ENCODE measurements at regions of chr15 and their contacts with region 1.

Region 1: DNA sequence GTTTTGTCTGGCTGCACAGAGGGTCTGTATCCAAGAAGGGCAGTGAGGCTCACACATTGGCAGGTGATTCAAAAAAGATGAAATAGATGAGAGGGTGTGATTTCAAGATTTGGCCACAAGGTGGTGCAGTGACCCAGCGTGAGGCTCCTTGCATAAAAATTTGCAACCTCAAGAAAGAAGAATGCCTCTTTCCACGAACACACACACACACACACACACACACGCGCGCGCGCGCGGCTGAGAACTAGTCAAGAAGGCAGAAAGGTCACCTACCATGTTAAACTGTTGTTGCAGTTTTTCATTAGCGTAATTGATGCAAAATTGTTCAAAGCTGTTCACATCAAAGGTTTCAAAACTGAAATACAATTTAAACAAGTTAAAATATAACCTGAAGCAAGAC is 39.2 kb downstream of the MYO5C start:
- DNase-seq: peak; percentile 61 to 70
- H3K4me3 ChIP-seq: no peak overlapping the region
- H3K4me3 Mint-ChIP-seq: no peak overlapping the region
- H3K27ac Mint-ChIP-seq: peak overlapping the region; percentile 33
- H3K4me1 ChIP-seq: no peaks in the 10 kb centered on the region
- H3K4me1 Mint-ChIP-seq: no peaks in the 10 kb centered on the region
- H3K27me3 ChIP-seq: no peaks in the 10 kb centered on the region
- H3K27me3 Mint-ChIP-seq: no peaks in the 10 kb centered on the region
- CTCF ChIP-seq: peak; percentile 66 to 69

Region 2: GRCh38 chr15:52337198-52337853 is 81.0 kb after region 1 on chr15:
- CTCF ChIA-PET with region 1: interaction called, 3 read pairs
- POLR2A ChIA-PET with region 1: no interaction called
- intact Hi-C with region 1: loop called (anchors 2 kb)
- DNase-seq: no peak
- H3K4me3 ChIP-seq: no peak overlapping the region
- H3K4me3 Mint-ChIP-seq: no peak overlapping the region
- H3K27ac Mint-ChIP-seq: no peak overlapping the region
- H3K4me1 ChIP-seq: peaks cover 5% of the 10 kb centered on the region; the same call in 1 of the 2 replicates
- H3K4me1 Mint-ChIP-seq: no peaks in the 10 kb centered on the region
- H3K27me3 ChIP-seq: no peaks in the 10 kb centered on the region
- H3K27me3 Mint-ChIP-seq: no peaks in the 10 kb centered on the region
- CTCF ChIP-seq: no peak

Region 3: GRCh38 chr15:52466134-52466701 is 209.9 kb after region 1 on chr15:
- CTCF ChIA-PET with region 1: interaction called, 3 read pairs
- POLR2A ChIA-PET with region 1: no interaction called
- intact Hi-C with region 1: loop called (anchors 1 kb)
- DNase-seq: no peak
- H3K4me3 ChIP-seq: no peak overlapping the region
- H3K4me3 Mint-ChIP-seq: no peak overlapping the region
- H3K27ac Mint-ChIP-seq: no peak overlapping the region
- H3K4me1 ChIP-seq: no peaks in the 10 kb centered on the region
- H3K4me1 Mint-ChIP-seq: no peaks in the 10 kb centered on the region
- H3K27me3 ChIP-seq: no peaks in the 10 kb centered on the region
- H3K27me3 Mint-ChIP-seq: no peaks in the 10 kb centered on the region
- CTCF ChIP-seq: no peak

Region 4: DNA sequence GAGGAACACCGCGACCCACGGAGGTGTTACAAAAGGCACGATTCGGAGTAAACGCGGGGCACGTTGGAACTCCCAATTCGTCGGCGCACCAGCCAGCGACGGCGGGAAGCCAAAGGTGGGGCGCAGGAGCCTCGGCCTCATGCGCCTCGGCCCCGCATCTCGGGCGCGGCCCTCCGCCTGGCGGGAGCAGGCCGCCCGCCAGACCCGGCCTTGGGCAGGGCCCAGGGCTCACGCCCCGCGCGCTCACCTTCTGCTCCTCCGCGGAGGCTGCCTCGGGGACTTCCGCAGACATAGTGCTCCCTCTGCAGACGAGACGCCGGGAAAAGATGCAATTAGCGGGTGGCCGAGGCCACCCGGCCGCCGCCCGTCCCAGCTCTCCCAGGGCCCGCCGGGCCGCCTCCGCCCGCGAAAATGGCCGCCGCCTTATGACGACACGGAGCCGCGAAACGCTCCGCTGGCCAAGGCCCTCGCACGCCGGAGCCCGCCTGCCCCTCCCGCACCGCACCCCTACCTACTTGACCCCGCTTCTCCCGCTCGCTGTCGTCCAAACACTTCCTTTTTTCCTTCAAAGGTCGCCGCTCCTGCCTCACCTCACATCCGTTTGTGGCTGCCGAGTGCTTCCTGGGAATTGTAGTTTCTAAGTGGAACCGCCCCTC is 312.4 kb after region 1 on chr15 and contains the start of gene ARPP19:
- CTCF ChIA-PET with region 1: no interaction called
- POLR2A ChIA-PET with region 1: no interaction called
- intact Hi-C with region 1: loop called (anchors 2 kb)
- DNase-seq: peak; percentile 95 to 96
- H3K4me3 ChIP-seq: peak within 1 kb of the TSS; percentile 56
- H3K4me3 Mint-ChIP-seq: peak within 1 kb of the TSS; percentile 77
- H3K27ac Mint-ChIP-seq: peak within 1 kb of the TSS; percentile 85
- H3K4me1 ChIP-seq: no peaks in the 10 kb centered on the region; the same call in 1 of the 2 replicates
- H3K4me1 Mint-ChIP-seq: peaks cover 7% of the 10 kb centered on the region
- H3K27me3 ChIP-seq: no peaks in the 10 kb centered on the region
- H3K27me3 Mint-ChIP-seq: no peaks in the 10 kb centered on the region
- CTCF ChIP-seq: no peak
- total RNA-seq, gene ARPP19: 164 and 184 TPM in 2 replicates

Region 5: DNA sequence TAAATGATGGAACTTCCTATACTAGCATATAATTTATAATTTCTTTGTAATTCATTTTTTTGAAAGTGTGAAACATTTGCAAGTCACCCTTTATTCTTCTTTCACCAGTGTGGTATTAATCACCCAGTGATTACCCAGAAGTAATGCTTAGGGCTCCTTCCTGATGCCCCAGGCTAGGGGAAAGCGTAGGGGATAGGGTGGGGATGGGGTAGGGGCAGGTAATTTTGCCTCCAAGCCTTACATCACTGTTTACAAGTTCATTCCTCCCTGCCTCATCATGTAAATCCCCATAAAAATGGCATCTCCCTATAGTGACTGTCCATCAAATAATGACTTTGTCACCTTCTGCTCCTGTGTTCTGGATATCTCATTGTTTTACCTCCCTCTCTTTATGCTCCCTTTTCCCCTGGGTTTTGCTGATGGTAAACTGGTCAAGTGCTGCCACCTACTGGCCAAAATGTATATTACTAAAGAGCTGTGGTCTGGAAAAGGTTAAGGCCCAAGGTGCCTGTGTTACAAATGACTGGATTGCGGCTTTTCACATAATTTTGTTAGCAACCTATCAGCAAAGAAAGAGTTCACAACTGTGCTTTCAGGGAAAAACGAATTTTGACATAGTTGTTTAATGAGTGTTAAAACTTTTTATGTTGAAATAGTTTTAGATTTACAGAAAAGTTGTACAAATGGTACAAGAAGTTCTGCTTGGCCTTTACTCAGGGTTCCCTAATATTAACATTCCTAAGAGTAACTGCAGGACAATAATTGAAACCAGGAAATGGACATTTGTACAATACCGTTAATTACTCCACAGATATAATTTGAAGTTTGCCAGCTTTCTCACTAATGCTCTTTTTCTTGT is 479.1 kb after region 1 on chr15:
- CTCF ChIA-PET with region 1: interaction called, 10 read pairs
- POLR2A ChIA-PET with region 1: no interaction called
- intact Hi-C with region 1: loop called (anchors 1 kb)
- DNase-seq: peak; percentile 62 to 83
- H3K4me3 ChIP-seq: no peak overlapping the region
- H3K4me3 Mint-ChIP-seq: no peak overlapping the region
- H3K27ac Mint-ChIP-seq: no peak overlapping the region
- H3K4me1 ChIP-seq: no peaks in the 10 kb centered on the region
- H3K4me1 Mint-ChIP-seq: peaks cover 4% of the 10 kb centered on the region
- H3K27me3 ChIP-seq: no peaks in the 10 kb centered on the region
- H3K27me3 Mint-ChIP-seq: peaks cover 14% of the 10 kb centered on the region
- CTCF ChIP-seq: peak; percentile 47 to 84

Measured in Caco-2 (cell line).